ENCODE measurements at regions of chr1 and their contacts with region 1.

Region 1: DNA sequence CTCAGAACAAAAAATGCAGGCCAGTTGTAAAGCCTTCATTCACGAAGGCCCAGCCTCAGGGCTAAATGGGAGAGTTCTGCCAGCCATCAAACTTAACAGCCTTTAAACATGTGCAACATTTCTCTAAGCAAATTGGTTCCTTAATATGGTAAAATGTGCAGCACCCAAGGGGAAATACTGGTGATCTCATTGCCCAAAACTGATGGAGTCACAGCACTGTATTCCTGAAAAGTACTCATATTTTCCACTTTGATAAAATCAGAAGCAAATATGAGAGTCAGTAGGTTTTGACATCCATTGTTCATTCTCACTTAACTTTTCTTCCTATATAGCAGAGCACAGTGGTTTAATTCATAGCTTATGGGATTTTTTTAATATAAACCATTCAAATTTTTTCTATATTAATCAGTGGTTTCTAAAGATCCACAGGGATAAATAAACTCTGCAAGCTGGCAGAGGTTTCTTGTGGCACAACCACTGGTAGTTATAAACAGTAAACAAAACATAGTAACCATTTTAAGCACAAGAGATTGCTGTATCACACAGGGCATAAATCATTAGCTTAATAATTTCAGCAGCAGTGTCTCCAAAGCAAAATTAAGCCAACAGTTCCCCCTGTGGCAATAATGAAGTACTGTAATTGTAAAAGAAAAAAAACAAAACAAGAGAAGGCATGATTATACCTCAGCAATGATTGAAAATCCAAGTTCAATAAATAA is 106.9 kb upstream of the LYPLAL1 start:
- DNase-seq: peak in 2 of 4 donors; percentile 24 to 58
- ATAC-seq: peak; percentile 83
- H3K4me3 ChIP-seq: no peak overlapping the region
- H3K27ac ChIP-seq: no peak overlapping the region
- H3K4me1 ChIP-seq: peaks cover 0 to 4% of the 10 kb centered on the region in 2 donors
- H3K27me3 ChIP-seq: no peaks in the 10 kb centered on the region
- CTCF ChIP-seq: peak; percentile 27 to 63

Region 2: GRCh38 chr1:218345673-218346390 is 721.0 kb before region 1 on chr1:
- intact Hi-C with region 1: loop called in 1 of 2 experiments (anchors 10 kb)
- DNase-seq: peak in 3 of 4 donors; percentile 77 to 86 (median 85)
- ATAC-seq: peak; percentile 73
- H3K4me3 ChIP-seq: peak overlapping the region; percentile 54 to 64
- H3K27ac ChIP-seq: peak overlapping the region; percentile 73 to 86
- H3K4me1 ChIP-seq: peaks cover 4 to 35% of the 10 kb centered on the region in 2 donors
- H3K27me3 ChIP-seq: peaks cover 0 to 43% of the 10 kb centered on the region in 2 donors
- CTCF ChIP-seq: no peak

Region 3: DNA sequence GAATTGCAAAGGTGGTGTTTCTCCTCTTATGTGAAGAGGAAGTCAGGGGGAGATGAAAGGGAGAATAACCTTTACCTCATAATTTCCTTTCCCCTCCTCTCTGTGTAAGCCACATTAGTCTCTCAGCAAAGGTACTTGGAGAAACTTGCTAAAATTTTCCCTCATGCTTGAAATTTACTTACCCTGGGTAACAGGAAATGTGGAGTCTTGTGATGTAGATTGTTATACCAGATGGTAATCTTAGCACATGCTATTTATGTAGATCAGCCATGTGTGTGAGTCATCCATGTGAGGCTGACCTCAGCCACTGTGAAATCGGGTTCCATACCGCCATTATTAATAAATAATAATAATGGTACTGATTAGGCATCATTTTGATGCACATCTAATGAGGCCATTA is 593.3 kb before region 1 on chr1:
- intact Hi-C with region 1: no loop called
- DNase-seq: no peak
- ATAC-seq: no peak
- H3K4me3 ChIP-seq: no peak overlapping the region
- H3K27ac ChIP-seq: no peak overlapping the region
- H3K4me1 ChIP-seq: peaks cover 0 to 8% of the 10 kb centered on the region in 2 donors
- H3K27me3 ChIP-seq: no peaks in the 10 kb centered on the region
- CTCF ChIP-seq: no peak

Region 4: DNA sequence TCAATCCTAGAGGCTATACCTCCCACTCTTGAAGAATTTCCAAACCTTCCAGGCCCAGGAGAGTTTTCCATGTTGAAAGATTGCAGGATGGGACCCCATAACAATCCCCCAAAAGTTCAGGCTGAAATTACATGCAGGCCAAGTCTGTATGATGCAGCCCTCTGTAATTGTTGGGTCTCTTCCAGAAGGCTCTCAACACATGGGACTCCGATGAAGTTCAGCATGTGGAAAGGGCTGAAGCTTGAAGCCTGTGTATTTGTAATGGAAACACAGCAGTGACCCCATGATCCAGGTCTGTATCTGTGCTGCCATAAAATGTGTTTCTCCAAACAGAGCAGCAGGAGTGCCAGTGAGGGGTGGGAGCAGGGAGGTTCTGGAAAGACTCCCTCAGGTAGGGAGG is 95.6 kb before region 1 on chr1:
- intact Hi-C with region 1: no loop called
- DNase-seq: peak in 1 of 4 donors; percentile 50
- ATAC-seq: no peak
- H3K4me3 ChIP-seq: no peak overlapping the region
- H3K27ac ChIP-seq: no peak overlapping the region
- H3K4me1 ChIP-seq: no peaks in the 10 kb centered on the region
- H3K27me3 ChIP-seq: no peaks in the 10 kb centered on the region
- CTCF ChIP-seq: no peak